Mammary epithelial cell (primary cell): ENCODE measurements at regions of chr19 and their contacts with region 1.

Region 1: GRCh38 chr19:14472202-14472938 is 2.8 kb downstream of the PTGER1 start:
- DNase-seq: no peak
- H3K4me3 ChIP-seq: no peak overlapping the region
- H3K27ac ChIP-seq: no peak overlapping the region
- H3K4me1 ChIP-seq: peaks cover 28% of the 10 kb centered on the region
- H3K27me3 ChIP-seq: no peaks in the 10 kb centered on the region
- CTCF ChIP-seq: peak; percentile 68 to 93

Region 2: GRCh38 chr19:14198384-14199376 is 273.7 kb before region 1 on chr19:
- CTCF ChIA-PET with region 1: no interaction called
- dilution Hi-C with region 1: no loop called
- in situ Hi-C with region 1: no loop called
- intact Hi-C with region 1: loop called (anchors 5 kb)
- DNase-seq: no peak
- H3K4me3 ChIP-seq: no peak overlapping the region
- H3K27ac ChIP-seq: no peak overlapping the region
- H3K4me1 ChIP-seq: no peaks in the 10 kb centered on the region
- H3K27me3 ChIP-seq: peaks cover 2% of the 10 kb centered on the region
- CTCF ChIP-seq: peak in 1 of 2 donors; percentile 16

Region 3: DNA sequence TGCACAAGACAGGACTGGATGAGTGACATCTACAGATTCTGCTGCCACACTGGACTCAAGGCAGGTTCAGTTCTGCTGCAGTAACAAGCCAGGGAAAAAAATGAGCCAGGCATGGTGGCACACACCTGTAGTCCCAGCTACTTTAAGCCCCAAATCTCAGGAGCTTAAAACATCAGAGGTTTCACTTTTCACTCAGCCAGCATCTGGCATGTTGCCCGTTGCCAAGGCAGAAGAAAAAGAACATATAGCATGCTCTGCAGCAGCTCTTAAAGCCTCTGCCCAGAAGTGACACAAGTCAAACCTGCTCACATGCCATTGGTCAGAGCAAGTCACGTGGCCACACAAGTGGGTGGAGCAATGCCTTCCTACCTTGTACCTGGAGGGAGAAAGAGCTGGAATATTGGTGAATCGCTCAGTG is 105.9 kb before region 1 on chr19:
- CTCF ChIA-PET with region 1: no interaction called
- dilution Hi-C with region 1: no loop called
- in situ Hi-C with region 1: no loop called
- intact Hi-C with region 1: loop called (anchors 10 kb)
- DNase-seq: peak; percentile 87
- H3K4me3 ChIP-seq: no peak overlapping the region
- H3K27ac ChIP-seq: no peak overlapping the region
- H3K4me1 ChIP-seq: peaks cover 7% of the 10 kb centered on the region
- H3K27me3 ChIP-seq: no peaks in the 10 kb centered on the region
- CTCF ChIP-seq: no peak

Region 4: GRCh38 chr19:14432791-14433553 is 39.4 kb before region 1 on chr19 and contains the start of gene PKN1:
- CTCF ChIA-PET with region 1: no interaction called
- dilution Hi-C with region 1: no loop called
- in situ Hi-C with region 1: no loop called
- intact Hi-C with region 1: loop called (anchors 5 kb)
- DNase-seq: no peak
- H3K4me3 ChIP-seq: peak within 1 kb of the TSS; percentile 12 to 53 (median 39)
- H3K27ac ChIP-seq: no peak within 1 kb of the TSS
- H3K4me1 ChIP-seq: peaks cover 17% of the 10 kb centered on the region
- H3K27me3 ChIP-seq: no peaks in the 10 kb centered on the region
- CTCF ChIP-seq: peak in 1 of 2 donors; percentile 18
- total RNA-seq, gene PKN1: 26.3 to 43.3 TPM

Region 5: DNA sequence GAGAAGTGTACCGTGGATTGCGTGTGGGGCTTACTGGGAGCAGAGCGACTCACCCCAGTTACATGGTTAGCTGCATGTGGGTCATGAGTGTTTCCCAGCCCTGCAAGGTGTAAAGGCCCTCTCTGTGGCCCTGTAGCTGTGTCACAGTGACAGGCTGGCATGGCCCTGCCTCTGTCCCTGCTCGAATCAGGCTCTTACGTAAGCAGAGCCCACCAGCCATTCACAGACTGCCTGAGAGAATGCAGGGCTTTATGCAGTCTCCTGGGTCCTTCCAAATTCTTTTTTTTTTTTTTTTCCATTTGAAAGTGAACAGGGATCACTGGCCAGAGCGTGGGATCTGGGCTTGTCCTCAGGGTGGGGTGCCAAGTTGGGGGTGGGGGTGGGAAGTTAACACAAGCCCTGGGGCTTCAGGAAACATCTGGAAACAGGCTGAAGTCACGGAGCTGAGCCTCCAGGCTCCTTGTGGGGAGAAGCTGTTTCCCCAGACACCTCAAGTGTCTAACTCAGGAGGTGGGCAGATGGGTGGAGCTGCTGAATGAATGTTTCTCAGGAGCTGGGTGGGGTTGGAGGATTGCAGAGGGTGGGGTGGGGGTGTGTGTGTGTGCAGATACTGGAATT is 70.5 kb after region 1 on chr19:
- CTCF ChIA-PET with region 1: no interaction called
- dilution Hi-C with region 1: no loop called
- in situ Hi-C with region 1: no loop called
- intact Hi-C with region 1: no loop called
- DNase-seq: peak; percentile 64
- H3K4me3 ChIP-seq: no peak overlapping the region
- H3K27ac ChIP-seq: peak overlapping the region; percentile 58
- H3K4me1 ChIP-seq: peaks cover 18% of the 10 kb centered on the region
- H3K27me3 ChIP-seq: no peaks in the 10 kb centered on the region
- CTCF ChIP-seq: no peak